Activated T-helper 2 cell treated with anti-CD3 and anti-CD28 coated beads, Interferon-gamma antibody, Interleukin-2, Interleukin-4, amounts not matched to agents 10 μg/mL and 5 μg/mL and 100 μg/mL, durations not matched to agents 14 hours and 24 hours and 36 hours (primary cell): ENCODE measurements at regions of chr15 and their contacts with region 1.

Region 1: GRCh38 chr15:25832158-25832557 is 31.0 kb downstream of the ATP10A start:
- DNase-seq: no peak
- H3K4me3 Mint-ChIP-seq: no peak overlapping the region
- H3K27ac Mint-ChIP-seq: peak overlapping the region; percentile 73
- H3K4me1 Mint-ChIP-seq: peaks cover 20% of the 10 kb centered on the region
- H3K27me3 Mint-ChIP-seq: no peaks in the 10 kb centered on the region

Region 2: DNA sequence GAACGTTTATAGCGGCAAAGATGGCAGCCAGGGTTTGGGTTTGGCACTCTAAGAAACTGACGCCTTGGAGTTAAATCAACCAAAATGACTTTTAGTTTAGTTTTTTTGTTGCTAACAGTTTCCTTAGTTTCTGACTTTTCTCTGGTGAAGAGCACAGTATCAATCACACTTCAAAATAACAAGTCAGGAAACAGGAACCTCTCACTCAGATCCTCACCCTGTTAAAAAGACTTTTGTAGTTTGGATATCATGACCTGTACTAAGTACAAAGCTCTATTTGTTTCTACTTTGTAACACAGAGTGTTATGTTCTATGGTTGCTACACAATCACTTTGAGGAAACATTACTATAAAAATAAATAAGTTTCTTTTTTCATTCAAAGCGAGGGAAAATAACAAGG is 20.1 kb before region 1 on chr15:
- intact Hi-C with region 1: loop called (anchors 2 kb)
- DNase-seq: no peak
- H3K4me3 Mint-ChIP-seq: peak overlapping the region; percentile 67
- H3K27ac Mint-ChIP-seq: peak overlapping the region; percentile 82
- H3K4me1 Mint-ChIP-seq: peaks cover 65% of the 10 kb centered on the region
- H3K27me3 Mint-ChIP-seq: no peaks in the 10 kb centered on the region

Region 3: GRCh38 chr15:25883463-25884259 is 51.5 kb after region 1 on chr15:
- intact Hi-C with region 1: no loop called
- DNase-seq: no peak
- H3K4me3 Mint-ChIP-seq: no peak overlapping the region
- H3K27ac Mint-ChIP-seq: no peak overlapping the region
- H3K4me1 Mint-ChIP-seq: no peaks in the 10 kb centered on the region
- H3K27me3 Mint-ChIP-seq: peaks cover 14% of the 10 kb centered on the region